ENCODE measurements at regions of chr9 and their contacts with region 1.

Region 1: GRCh38 chr9:91164724-91165520 is 196.8 kb downstream of the AUH start:
- DNase-seq: peak; percentile 94
- H3K4me3 Mint-ChIP-seq: peak overlapping the region; percentile 81
- H3K27ac Mint-ChIP-seq: peak overlapping the region; percentile 98
- H3K4me1 Mint-ChIP-seq: peaks cover 55% of the 10 kb centered on the region
- H3K27me3 Mint-ChIP-seq: no peaks in the 10 kb centered on the region

Region 2: DNA sequence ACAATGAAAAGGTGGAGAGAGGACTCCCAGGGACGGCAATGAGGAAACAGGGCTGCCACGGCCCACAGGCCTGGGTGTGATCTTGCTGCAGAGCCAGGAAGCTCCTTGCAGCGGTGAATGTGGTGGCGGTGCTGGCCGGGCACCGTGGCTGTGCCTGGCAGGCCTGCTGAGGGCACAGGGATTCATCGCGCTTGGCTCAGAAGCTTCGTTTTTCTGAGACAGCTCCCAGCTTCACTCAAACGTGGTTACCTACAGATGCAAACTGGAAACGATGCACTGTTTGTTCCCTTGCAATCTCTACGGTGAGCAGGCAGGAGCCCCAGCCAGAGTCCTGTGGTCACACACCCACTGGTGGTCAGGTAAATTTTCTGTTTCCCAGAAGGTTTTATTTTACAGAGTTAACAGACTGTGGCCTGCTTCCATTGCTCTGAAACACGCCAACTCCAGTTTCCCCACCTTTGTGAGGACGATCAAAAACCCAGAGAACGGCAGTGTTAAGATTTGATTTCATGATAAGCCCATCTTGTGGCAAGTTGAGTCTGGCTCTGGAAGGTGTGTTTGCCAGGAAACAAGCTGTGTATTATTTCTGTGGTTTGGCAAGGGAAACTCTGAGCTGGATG is 12.8 kb after region 1 on chr9:
- intact Hi-C with region 1: loop called (anchors 1 kb)
- DNase-seq: peak; percentile 81
- H3K4me3 Mint-ChIP-seq: peak overlapping the region; percentile 56
- H3K27ac Mint-ChIP-seq: peak overlapping the region; percentile 98
- H3K4me1 Mint-ChIP-seq: peaks cover 58% of the 10 kb centered on the region
- H3K27me3 Mint-ChIP-seq: no peaks in the 10 kb centered on the region

Region 3: DNA sequence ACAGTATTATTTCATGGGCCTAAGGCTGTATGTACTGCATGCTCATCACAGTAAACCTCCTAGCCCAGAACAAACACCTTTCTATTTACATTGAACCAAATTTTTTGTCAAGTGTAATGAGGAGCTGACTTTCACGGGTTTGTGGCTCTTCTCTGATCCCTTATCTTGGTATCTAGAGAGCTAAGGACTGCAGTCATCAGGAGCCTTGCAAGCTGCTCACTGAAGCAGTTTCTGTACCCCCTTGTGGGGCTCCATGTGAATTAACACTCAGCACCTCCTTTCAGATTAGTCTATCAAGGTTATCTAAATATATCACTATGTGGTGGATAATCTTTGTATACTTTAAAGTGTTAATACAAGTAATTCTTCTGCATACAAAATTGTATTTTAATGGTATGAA is 88.6 kb after region 1 on chr9:
- intact Hi-C with region 1: loop called (anchors 5 kb)
- DNase-seq: peak; percentile 88
- H3K4me3 Mint-ChIP-seq: no peak overlapping the region
- H3K27ac Mint-ChIP-seq: no peak overlapping the region
- H3K4me1 Mint-ChIP-seq: peaks cover 41% of the 10 kb centered on the region
- H3K27me3 Mint-ChIP-seq: no peaks in the 10 kb centered on the region

Measured in activated CD4-positive, alpha-beta T cell treated with anti-CD3 and anti-CD28 coated beads, Interleukin-2, amount 10 ng/mL, durations not matched to agents 24 days and 14 days (primary cell).